ENCODE measurements at regions of chr7 and their contacts with region 1.

Region 1: GRCh38 chr7:155598810-155599210 is 45.7 kb upstream of the RBM33 start:
- DNase-seq: peak; percentile 89
- ATAC-seq: peak; percentile 24; the same call in 1 of the 2 replicates
- H3K4me3 Mint-ChIP-seq: no peak overlapping the region
- H3K27ac Mint-ChIP-seq: no peak overlapping the region
- H3K4me1 Mint-ChIP-seq: peaks cover 39% of the 10 kb centered on the region
- H3K27me3 Mint-ChIP-seq: no peaks in the 10 kb centered on the region; the same call in 1 of the 2 replicates
- CTCF ChIP-seq: peak; percentile 94

Region 2: GRCh38 chr7:155456738-155457564 is 141.9 kb before region 1 on chr7:
- CTCF ChIA-PET with region 1: no interaction called
- POLR2A ChIA-PET with region 1: no interaction called
- DNase-seq: peak; percentile 73
- ATAC-seq: peak; percentile 19
- H3K4me3 Mint-ChIP-seq: peak overlapping the region; percentile 56
- H3K27ac Mint-ChIP-seq: no peak overlapping the region
- H3K4me1 Mint-ChIP-seq: peaks cover 29% of the 10 kb centered on the region
- H3K27me3 Mint-ChIP-seq: peaks cover 96% of the 10 kb centered on the region
- CTCF ChIP-seq: no peak

Region 3: DNA sequence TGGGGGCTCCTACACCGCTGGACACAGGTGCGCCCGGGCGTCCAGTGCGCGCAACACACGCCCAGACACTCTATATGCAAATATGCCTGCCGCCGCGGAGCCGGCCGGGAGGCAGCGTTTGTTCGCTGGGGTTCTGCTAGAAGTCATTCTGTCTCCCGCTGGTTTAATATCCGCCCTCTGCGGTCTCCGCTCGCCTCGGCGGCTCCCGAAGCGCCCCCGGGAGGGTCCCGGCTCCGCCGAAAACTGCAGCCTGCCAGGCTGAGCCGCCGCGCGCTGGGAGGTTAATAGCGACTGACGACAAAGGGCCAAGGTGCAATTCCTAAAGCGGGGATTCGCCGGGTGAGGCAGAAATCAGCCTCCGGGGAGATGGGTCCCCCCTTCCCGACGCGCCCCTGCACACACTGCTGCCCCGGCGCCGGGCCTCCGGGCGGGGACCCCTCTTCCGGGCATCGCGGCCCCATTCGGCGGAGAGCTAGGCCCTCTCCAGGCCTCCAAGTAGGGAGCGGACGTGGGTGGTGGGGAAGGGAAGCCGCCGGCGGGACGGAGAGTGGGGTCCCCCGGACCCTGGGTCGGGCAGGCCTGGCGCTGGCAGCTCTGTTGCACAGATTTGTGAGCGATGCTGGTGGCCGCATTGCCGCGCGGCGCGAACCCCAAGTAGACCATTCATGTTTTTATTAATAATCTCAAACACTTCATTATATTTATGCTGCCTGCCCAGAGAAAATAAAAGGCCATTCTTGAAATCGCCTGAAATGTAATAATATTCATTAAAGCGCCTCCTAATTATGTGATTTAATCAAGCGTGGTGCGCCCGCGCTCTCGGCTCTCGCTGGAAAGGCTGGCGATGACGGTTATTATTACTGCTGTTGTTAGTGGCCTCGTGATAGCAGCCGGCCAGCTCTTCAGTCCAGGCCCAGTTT is 131.7 kb before region 1 on chr7:
- CTCF ChIA-PET with region 1: no interaction called
- POLR2A ChIA-PET with region 1: no interaction called
- DNase-seq: peak; percentile 86
- ATAC-seq: peak; percentile 54
- H3K4me3 Mint-ChIP-seq: peak overlapping the region; percentile 63
- H3K27ac Mint-ChIP-seq: no peak overlapping the region
- H3K4me1 Mint-ChIP-seq: peaks cover 36% of the 10 kb centered on the region
- H3K27me3 Mint-ChIP-seq: peaks cover 100% of the 10 kb centered on the region
- CTCF ChIP-seq: no peak

Region 4: DNA sequence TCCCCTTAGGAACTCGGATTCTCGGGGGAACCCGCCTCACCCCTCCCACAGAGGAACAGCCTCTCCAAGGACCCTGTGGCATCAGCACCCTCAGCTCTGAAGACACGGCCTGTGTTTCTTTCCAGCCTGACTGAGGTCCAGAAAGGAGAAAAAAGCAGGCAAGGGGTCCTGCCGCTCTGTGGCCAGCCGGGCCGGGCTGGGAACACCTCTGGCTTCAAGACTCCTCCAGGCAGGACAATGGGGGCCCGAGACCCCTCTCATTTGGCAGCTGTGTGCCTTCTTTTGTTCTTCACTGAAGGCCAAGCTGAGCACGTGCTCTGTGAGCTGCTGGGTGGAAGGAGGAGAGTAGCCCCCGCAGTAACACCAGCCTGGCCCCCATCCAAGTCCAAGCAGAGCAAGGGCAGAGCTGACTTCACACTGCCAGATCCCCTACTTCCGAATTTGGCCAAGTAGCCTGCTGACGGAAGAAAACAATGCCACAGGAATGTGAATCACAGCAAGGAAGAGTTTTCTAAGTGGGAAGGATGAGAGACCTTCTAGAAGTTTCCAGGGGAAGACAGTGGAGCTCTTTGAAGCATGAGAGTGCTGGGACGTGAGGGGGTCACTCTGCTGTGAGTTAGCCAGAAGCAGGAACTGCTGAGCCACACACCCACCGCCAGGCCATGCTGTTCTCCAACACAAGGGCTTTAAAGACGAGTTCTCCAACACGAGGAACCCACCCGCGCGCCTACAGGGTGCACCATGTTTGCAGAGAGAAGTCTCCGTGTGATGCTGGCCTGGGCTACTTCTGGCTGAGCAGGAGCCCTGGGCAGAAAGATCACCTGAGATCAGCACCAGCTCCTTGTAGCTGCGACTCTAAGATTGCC is 55.6 kb before region 1 on chr7:
- CTCF ChIA-PET with region 1: interaction called, 11 read pairs
- POLR2A ChIA-PET with region 1: no interaction called
- DNase-seq: no peak
- ATAC-seq: peak; percentile 55
- H3K4me3 Mint-ChIP-seq: no peak overlapping the region
- H3K27ac Mint-ChIP-seq: no peak overlapping the region
- H3K4me1 Mint-ChIP-seq: peaks cover 9% of the 10 kb centered on the region
- H3K27me3 Mint-ChIP-seq: peaks cover 9% of the 10 kb centered on the region; the same call in 1 of the 2 replicates
- CTCF ChIP-seq: no peak

Region 5: DNA sequence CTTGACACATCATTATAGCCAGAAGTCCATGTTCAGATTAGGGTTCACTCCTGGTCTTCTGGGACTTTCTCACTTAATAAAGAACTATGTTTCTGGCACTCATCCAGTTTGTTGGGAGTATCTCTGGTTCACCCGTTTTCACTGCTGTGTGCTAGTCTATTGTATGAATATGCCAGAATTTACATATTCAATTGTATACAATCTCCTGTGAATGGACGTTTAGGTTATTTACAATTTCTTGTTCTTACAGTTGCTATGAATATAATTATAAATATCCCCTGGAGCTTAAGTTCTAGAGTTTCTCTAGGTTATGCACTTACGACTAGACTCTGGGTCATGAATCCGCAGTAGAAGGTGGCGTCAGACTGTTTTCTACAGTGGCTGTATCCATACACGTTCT is 25.6 kb after region 1 on chr7:
- CTCF ChIA-PET with region 1: interaction called, 14 read pairs
- POLR2A ChIA-PET with region 1: no interaction called
- DNase-seq: no peak
- ATAC-seq: no peak
- H3K4me3 Mint-ChIP-seq: no peak overlapping the region
- H3K27ac Mint-ChIP-seq: no peak overlapping the region
- H3K4me1 Mint-ChIP-seq: peaks cover 3% of the 10 kb centered on the region; the same call in 1 of the 2 replicates
- H3K27me3 Mint-ChIP-seq: no peaks in the 10 kb centered on the region; the same call in none of the 2 replicates
- CTCF ChIP-seq: no peak

Region 6: DNA sequence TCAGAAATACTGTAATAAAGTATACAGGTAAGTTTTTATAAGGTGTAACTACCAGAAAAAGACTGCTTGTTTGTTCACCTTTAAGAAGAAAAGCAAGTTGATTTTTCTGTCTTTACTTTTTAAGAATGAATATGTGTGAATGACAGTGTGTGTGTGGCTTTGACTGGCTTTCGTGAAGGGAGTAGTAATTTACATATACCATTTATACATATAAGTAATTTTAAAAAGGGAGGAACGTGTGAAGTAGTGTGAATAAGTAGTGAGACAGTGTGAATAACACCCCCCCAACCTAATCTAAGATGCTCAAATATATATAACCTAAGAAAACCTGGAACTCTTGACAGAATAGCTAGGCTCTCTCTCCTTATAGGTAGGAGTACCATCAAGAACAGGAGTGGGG is 78.9 kb after region 1 on chr7:
- CTCF ChIA-PET with region 1: interaction called, 11 read pairs
- POLR2A ChIA-PET with region 1: no interaction called
- DNase-seq: no peak
- ATAC-seq: no peak
- H3K4me3 Mint-ChIP-seq: no peak overlapping the region
- H3K27ac Mint-ChIP-seq: no peak overlapping the region
- H3K4me1 Mint-ChIP-seq: peaks cover 30% of the 10 kb centered on the region
- H3K27me3 Mint-ChIP-seq: no peaks in the 10 kb centered on the region
- CTCF ChIP-seq: no peak

Region 7: DNA sequence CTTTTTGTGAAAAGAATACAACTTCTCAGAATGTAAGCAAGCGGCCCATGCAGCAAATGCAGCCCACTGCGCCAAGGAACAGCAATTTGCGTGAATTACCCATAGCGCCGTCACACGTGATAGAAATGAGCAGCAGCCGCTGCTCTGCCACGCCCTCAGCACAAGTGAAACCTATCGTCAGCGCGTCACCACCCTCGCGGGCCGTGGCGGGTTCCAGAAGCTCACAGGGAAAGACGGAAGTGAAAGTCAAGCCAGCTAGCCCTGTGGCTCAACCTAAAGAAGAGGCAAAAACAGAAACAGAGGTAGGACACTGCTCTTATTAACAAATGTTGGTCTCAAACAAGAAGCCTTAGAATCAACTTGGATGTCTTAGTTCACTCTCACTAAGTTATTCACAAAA is 143.0 kb after region 1 on chr7:
- CTCF ChIA-PET with region 1: interaction called, 12 read pairs
- POLR2A ChIA-PET with region 1: no interaction called
- DNase-seq: no peak
- ATAC-seq: no peak
- H3K4me3 Mint-ChIP-seq: no peak overlapping the region
- H3K27ac Mint-ChIP-seq: peak overlapping the region; percentile 79; the same call in 1 of the 2 replicates
- H3K4me1 Mint-ChIP-seq: peaks cover 27% of the 10 kb centered on the region
- H3K27me3 Mint-ChIP-seq: no peaks in the 10 kb centered on the region
- CTCF ChIP-seq: no peak

Region 8: DNA sequence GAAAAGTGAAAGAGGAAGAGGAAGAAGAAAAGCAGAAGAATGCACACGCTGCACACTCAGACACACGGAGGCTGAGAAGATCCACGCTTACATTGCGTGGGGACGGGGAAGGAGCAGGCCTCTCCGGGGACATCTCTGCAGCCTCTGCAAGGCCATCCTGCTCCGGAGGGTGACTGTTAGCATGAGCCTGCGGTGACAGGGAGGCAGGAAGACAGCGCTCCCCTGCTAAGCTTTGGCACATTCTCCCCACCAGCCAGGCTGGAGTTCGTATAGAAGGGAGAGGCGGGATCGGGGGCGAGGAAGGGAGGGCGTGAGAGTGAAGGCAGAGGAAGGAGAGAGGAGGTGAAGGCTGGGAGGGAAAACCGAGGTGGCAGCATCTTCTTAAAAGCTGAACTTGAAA is 579.4 kb after region 1 on chr7:
- CTCF ChIA-PET with region 1: no interaction called
- POLR2A ChIA-PET with region 1: no interaction called
- DNase-seq: no peak
- ATAC-seq: no peak
- H3K4me3 Mint-ChIP-seq: no peak overlapping the region
- H3K27ac Mint-ChIP-seq: no peak overlapping the region
- H3K4me1 Mint-ChIP-seq: no peaks in the 10 kb centered on the region
- H3K27me3 Mint-ChIP-seq: peaks cover 7% of the 10 kb centered on the region
- CTCF ChIP-seq: no peak

Measured in WTC11 (cell line).